ENCODE measurements at regions of chr10 and their contacts with region 1.

Region 1: GRCh38 chr10:121608469-121609190 is 10.4 kb upstream of the FGFR2 start:
- DNase-seq: peak; percentile 48
- ATAC-seq: peak; percentile 88
- H3K4me3 ChIP-seq: no peak overlapping the region
- H3K27ac ChIP-seq: no peak overlapping the region
- H3K4me1 ChIP-seq: no peaks in the 10 kb centered on the region
- H3K27me3 ChIP-seq: peaks cover 7% of the 10 kb centered on the region; the same call in 1 of the 2 replicates
- CTCF ChIP-seq: peak; percentile 78

Region 2: GRCh38 chr10:120942806-120943413 is 665.7 kb before region 1 on chr10:
- CTCF ChIA-PET with region 1: no interaction called
- POLR2A ChIA-PET with region 1: no interaction called
- intact Hi-C with region 1: loop called (anchors 2 kb)
- DNase-seq: peak; percentile 71
- ATAC-seq: peak; percentile 98
- H3K4me3 ChIP-seq: no peak overlapping the region
- H3K27ac ChIP-seq: no peak overlapping the region
- H3K4me1 ChIP-seq: no peaks in the 10 kb centered on the region
- H3K27me3 ChIP-seq: no peaks in the 10 kb centered on the region
- CTCF ChIP-seq: peak; percentile 81

Region 3: GRCh38 chr10:121753726-121754476 is 145.3 kb after region 1 on chr10:
- CTCF ChIA-PET with region 1: no interaction called
- POLR2A ChIA-PET with region 1: no interaction called
- intact Hi-C with region 1: no loop called
- DNase-seq: peak; percentile 88
- ATAC-seq: peak; percentile 98
- H3K4me3 ChIP-seq: peak overlapping the region; percentile 9; the same call in 1 of the 2 replicates
- H3K27ac ChIP-seq: peak overlapping the region; percentile 87
- H3K4me1 ChIP-seq: peaks cover 18% of the 10 kb centered on the region
- H3K27me3 ChIP-seq: no peaks in the 10 kb centered on the region
- CTCF ChIP-seq: peak; percentile 46